ENCODE measurements at regions of chr2 and their contacts with region 1.

Region 1: GRCh38 chr2:200624658-200625057 is 38.8 kb downstream of the AOX1 start:
- DNase-seq: peak; percentile 89
- ATAC-seq: peak; percentile 89
- H3K4me3 ChIP-seq: no peak overlapping the region
- H3K27ac ChIP-seq: peak overlapping the region; percentile 87
- H3K4me1 ChIP-seq: peaks cover 29% of the 10 kb centered on the region
- H3K27me3 ChIP-seq: no peaks in the 10 kb centered on the region
- CTCF ChIP-seq: no peak
- POLR2A ChIP-seq: no peak
- RAD21 ChIP-seq: peak; percentile 7; the same call in 1 of the 2 replicates

Region 2: DNA sequence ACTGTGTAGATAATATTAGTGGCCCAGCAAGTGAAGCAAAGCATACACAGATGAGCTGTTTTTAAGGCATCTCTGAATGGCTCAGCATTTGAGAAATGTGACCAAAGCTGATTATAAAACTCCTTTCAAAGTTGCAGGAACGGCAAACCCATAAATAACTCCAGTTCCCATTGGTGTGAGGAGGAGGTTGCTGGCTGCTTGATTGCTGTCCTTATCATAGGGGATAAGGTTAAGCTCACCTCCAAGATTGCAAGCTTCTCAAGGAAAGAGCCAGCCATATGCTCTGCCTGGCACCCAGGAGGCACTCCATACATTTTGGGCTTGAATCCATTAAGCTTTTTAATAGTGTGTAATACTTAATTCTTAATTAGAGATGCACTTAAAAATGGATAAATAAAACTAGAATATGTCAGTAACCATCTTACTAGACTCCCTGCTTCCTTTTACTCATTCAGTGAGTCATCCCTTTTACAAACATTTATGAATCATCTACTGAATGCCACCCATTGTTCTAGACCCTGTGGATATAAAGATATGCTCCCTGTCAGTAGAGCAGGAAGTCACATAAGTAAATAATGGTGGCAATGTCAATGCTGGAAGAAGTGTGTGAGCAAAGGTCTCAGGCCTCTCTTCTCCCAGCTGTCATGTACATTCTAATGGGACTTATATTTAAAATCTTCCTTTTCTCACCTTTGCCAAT is 218.9 kb before region 1 on chr2:
- CTCF ChIA-PET with region 1: no interaction called
- POLR2A ChIA-PET with region 1: no interaction called
- dilution Hi-C with region 1: no loop called
- in situ Hi-C with region 1: no loop called
- intact Hi-C with region 1: no loop called
- DNase-seq: peak; percentile 95
- ATAC-seq: peak; percentile 66
- H3K4me3 ChIP-seq: no peak overlapping the region
- H3K27ac ChIP-seq: peak overlapping the region; percentile 96
- H3K4me1 ChIP-seq: peaks cover 27% of the 10 kb centered on the region
- H3K27me3 ChIP-seq: no peaks in the 10 kb centered on the region
- CTCF ChIP-seq: no peak
- POLR2A ChIP-seq: no peak
- RAD21 ChIP-seq: no peak; the same call in 1 of the 2 replicates

Region 3: GRCh38 chr2:200662738-200663137 is 38.1 kb after region 1 on chr2:
- CTCF ChIA-PET with region 1: no interaction called
- POLR2A ChIA-PET with region 1: no interaction called
- dilution Hi-C with region 1: no loop called
- in situ Hi-C with region 1: no loop called
- intact Hi-C with region 1: loop called (anchors 5 kb)
- DNase-seq: peak; percentile 78
- ATAC-seq: peak; percentile 89
- H3K4me3 ChIP-seq: no peak overlapping the region
- H3K27ac ChIP-seq: 0 out of 2 replicates have a peak overlapping the region, but pooled peaks have one; percentile 1
- H3K4me1 ChIP-seq: peaks cover 6% of the 10 kb centered on the region
- H3K27me3 ChIP-seq: no peaks in the 10 kb centered on the region
- CTCF ChIP-seq: no peak; the same call in 1 of the 2 replicates
- POLR2A ChIP-seq: no peak
- RAD21 ChIP-seq: no peak

Measured in IMR-90 (cell line).